ENCODE measurements at regions of chr22 and their contacts with region 1.

Region 1: DNA sequence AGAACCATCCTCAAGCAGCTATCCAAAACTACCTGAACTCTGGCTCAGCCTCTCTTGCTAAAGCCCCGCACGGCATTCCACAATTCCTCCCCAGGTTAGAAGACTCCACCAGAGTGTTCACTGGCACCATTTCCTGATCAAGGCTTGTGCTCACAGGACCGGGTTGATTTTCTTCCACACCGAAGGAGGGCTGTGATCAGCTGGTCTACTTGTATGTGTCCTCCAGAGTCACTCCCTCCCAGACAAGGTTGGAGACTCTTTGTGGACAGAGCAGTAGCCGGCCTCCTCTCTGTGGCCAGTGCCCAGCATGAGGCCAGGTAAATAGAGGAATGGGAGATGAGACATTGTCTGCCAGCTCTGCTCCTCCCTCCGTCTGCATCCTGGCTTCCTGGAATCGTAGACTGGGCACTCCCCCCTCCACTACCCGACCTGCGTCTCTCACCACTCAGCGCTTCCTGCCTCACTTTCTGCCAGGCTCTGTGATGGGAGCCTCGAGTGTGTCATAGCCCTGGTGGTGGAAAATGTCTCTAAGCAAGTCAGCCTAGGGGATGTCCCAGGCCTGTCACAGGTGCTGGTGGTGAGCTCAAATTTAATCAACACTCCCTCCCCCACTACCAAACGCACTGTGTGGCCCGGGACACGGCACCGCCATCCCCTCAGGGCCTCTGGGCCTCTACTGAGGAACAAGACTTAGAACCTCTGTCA is 12.5 kb upstream of the TMPRSS6 start:
- DNase-seq: peak; percentile 80 to 98
- ATAC-seq: peak; percentile 88 to 98 (median 92)
- H3K4me3 ChIP-seq: no peak overlapping the region
- H3K4me3 Mint-ChIP-seq: peak overlapping the region; percentile 74
- H3K27ac ChIP-seq: peak overlapping the region; percentile 84
- H3K27ac Mint-ChIP-seq: peak overlapping the region; percentile 94 to 99
- H3K4me1 ChIP-seq: peaks cover 52% of the 10 kb centered on the region
- H3K4me1 Mint-ChIP-seq: peaks cover 40 to 46% of the 10 kb centered on the region in 2 donors
- H3K27me3 ChIP-seq: no peaks in the 10 kb centered on the region
- H3K27me3 Mint-ChIP-seq: no peaks in the 10 kb centered on the region
- CTCF ChIP-seq: no peak

Region 2: DNA sequence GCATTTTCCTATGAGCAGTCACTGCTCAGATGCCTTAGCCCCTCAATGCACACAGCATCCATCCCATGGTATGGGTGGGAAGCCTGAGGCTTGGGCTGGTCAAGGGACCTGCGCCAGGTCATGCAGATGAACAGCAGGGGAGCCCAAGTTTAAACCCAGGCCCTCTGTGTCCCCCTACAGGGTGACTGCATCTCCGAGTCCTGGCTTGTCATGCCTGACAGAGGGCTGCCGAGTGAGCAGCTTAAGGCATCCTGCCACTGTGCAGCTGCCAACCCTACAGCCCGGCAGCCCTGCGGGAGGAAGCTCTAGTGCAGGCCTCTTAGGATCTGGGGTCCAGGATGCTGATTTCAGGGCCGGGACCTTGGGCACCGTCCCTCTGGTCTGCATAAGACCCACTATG is 17.7 kb after region 1 on chr22:
- intact Hi-C with region 1: loop called (anchors 2 kb)
- DNase-seq: no peak
- ATAC-seq: peak; percentile 35 to 50 (median 43)
- H3K4me3 ChIP-seq: no peak overlapping the region
- H3K4me3 Mint-ChIP-seq: peak overlapping the region; percentile 28
- H3K27ac ChIP-seq: peak overlapping the region; percentile 49
- H3K27ac Mint-ChIP-seq: peak overlapping the region; percentile 95 to 99
- H3K4me1 ChIP-seq: peaks cover 99% of the 10 kb centered on the region
- H3K4me1 Mint-ChIP-seq: peaks cover 67 to 99% of the 10 kb centered on the region in 2 donors
- H3K27me3 ChIP-seq: no peaks in the 10 kb centered on the region
- H3K27me3 Mint-ChIP-seq: no peaks in the 10 kb centered on the region
- CTCF ChIP-seq: no peak

Region 3: GRCh38 chr22:37148742-37149665 is 27.0 kb after region 1 on chr22:
- intact Hi-C with region 1: loop called (anchors 1 kb)
- DNase-seq: peak in 1 of 2 donors; percentile 32
- ATAC-seq: no peak
- H3K4me3 ChIP-seq: peak overlapping the region; percentile 92
- H3K4me3 Mint-ChIP-seq: peak overlapping the region; percentile 99
- H3K27ac ChIP-seq: peak overlapping the region; percentile 82
- H3K27ac Mint-ChIP-seq: peak overlapping the region; percentile 95 to 99
- H3K4me1 ChIP-seq: peaks cover 61% of the 10 kb centered on the region
- H3K4me1 Mint-ChIP-seq: peaks cover 71 to 85% of the 10 kb centered on the region in 2 donors
- H3K27me3 ChIP-seq: no peaks in the 10 kb centered on the region
- H3K27me3 Mint-ChIP-seq: no peaks in the 10 kb centered on the region
- CTCF ChIP-seq: no peak